ENCODE measurements at regions of chr10 and their contacts with region 1.

Region 1: GRCh38 chr10:97463363-97464132 is 17.6 kb downstream of the ZDHHC16 start:
- DNase-seq: no peak
- ATAC-seq: peak; percentile 85 to 89
- H3K4me3 ChIP-seq: no peak overlapping the region
- H3K27ac ChIP-seq: peak overlapping the region; percentile 62
- H3K4me1 ChIP-seq: peaks cover 23% of the 10 kb centered on the region
- H3K27me3 ChIP-seq: no peaks in the 10 kb centered on the region
- CTCF ChIP-seq: peak; percentile 81

Region 2: DNA sequence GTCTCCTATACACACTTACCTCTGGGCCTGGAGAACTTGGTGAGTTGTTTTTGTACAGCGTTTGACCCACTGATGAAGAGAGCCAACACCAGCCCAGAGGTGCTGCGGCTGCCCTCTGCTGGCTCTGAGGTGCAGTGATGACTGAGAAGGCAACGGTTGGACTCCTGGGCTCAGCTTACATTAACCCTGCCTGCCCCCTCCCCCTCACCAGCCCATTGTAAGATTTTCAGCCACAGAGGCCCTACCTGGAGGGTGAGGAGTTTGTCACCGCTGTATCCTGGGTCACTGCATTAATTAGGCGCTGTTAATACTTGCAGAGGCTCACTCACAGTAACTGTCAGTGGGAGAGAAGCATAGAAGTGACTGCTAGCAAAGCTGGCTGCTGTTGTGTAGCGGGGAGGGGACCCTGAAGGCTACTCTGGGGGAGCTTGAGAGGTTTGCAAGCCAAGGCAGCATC is 90.1 kb after region 1 on chr10:
- intact Hi-C with region 1: loop called (anchors 10 kb)
- DNase-seq: peak; percentile 80
- ATAC-seq: peak; percentile 91 to 93
- H3K4me3 ChIP-seq: no peak overlapping the region
- H3K27ac ChIP-seq: no peak overlapping the region
- H3K4me1 ChIP-seq: peaks cover 24% of the 10 kb centered on the region
- H3K27me3 ChIP-seq: no peaks in the 10 kb centered on the region
- CTCF ChIP-seq: peak; percentile 85

Measured in lower lobe of right lung (tissue), 2 donors.